ENCODE measurements at regions of chr7 and their contacts with region 1.

Region 1: GRCh38 chr7:29564496-29565223 is 1.0 kb downstream of the PRR15 start:
- DNase-seq: peak; percentile 50
- ATAC-seq: peak; percentile 62
- H3K4me3 ChIP-seq: peak overlapping the region; percentile 67 to 97 (median 79)
- H3K27ac ChIP-seq: peak overlapping the region; percentile 87
- H3K4me1 ChIP-seq: peaks cover 53% of the 10 kb centered on the region
- H3K27me3 ChIP-seq: no peaks in the 10 kb centered on the region; a peak in 1 of 5 replicates
- CTCF ChIP-seq: peak; percentile 23; the same call in 1 of the 2 replicates
- EP300 ChIP-seq: no peak
- POLR2A ChIP-seq: no peak
- RAD21 ChIP-seq: no peak

Region 2: GRCh38 chr7:28926871-28927597 is 637.6 kb before region 1 on chr7:
- CTCF ChIA-PET with region 1: no interaction called
- POLR2A ChIA-PET with region 1: no interaction called
- in situ Hi-C with region 1: loop called (anchors 10 kb)
- intact Hi-C with region 1: no loop called
- DNase-seq: peak; percentile 78
- ATAC-seq: peak; percentile 88
- H3K4me3 ChIP-seq: peak overlapping the region; percentile 60 to 72 (median 63)
- H3K27ac ChIP-seq: no peak overlapping the region
- H3K4me1 ChIP-seq: peaks cover 31% of the 10 kb centered on the region
- H3K27me3 ChIP-seq: no peaks in the 10 kb centered on the region
- CTCF ChIP-seq: peak; percentile 87
- EP300 ChIP-seq: no peak
- POLR2A ChIP-seq: no peak; a peak in 1 of 4 replicates
- RAD21 ChIP-seq: peak; percentile 57; the same call in 1 of the 2 replicates

Region 3: DNA sequence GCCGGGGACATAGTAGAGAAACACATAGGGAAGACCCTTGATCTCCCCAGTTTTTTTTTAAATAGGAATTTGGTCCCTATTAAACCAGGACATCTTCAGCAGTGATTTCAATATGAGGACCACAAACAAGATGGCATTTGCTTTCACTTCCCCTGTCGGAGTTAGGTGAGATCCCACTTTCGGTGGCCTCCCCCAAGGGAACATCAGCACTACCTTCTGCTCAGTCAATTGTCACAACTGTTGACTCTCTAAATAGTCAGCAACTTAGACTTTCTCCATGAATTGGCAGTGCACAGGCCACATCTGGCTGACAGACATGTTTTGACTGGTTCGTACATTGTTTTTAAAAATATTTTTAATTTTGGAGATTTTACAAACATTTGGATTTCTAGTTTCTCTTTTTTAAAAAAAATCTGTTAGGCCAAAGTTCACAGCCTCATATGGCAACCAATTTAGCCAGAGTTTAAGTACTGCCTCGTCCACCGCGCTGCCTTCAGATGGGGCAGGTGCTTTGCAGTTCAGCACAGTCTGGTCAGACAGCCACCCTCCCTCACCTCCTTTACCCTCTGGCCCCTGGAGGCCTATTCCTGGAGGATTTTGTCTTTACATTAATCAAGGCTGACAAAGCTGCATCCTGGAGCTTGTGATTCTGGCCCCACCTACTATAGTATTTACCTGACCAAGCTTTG is 140.2 kb before region 1 on chr7:
- CTCF ChIA-PET with region 1: no interaction called
- POLR2A ChIA-PET with region 1: no interaction called
- in situ Hi-C with region 1: no loop called
- intact Hi-C with region 1: no loop called
- DNase-seq: no peak
- ATAC-seq: no peak
- H3K4me3 ChIP-seq: no peak overlapping the region
- H3K27ac ChIP-seq: no peak overlapping the region
- H3K4me1 ChIP-seq: 0 out of 2 replicates have a peak, but pooled peaks cover 6% of the 10 kb centered on the region
- H3K27me3 ChIP-seq: no peaks in the 10 kb centered on the region
- CTCF ChIP-seq: no peak
- EP300 ChIP-seq: no peak
- POLR2A ChIP-seq: no peak
- RAD21 ChIP-seq: no peak

Region 4: DNA sequence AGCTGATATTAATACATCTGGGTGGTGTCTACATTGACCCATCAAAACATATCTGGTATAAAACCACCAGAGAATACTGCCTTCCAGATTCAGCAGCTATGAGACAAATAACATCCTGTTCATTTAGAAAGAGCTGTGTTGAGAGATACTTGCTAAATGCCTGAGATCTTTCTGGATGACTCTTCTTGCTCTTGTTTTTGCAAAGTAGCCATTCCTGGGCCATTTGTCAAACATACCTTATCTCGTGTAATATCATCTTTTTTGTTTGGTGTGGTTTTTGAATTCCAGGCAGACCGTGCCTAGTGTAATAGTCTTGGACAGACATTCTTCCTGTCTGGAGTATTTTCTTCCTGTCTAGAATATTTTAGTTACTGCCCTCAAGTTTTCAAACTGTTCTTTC is 75.7 kb before region 1 on chr7:
- CTCF ChIA-PET with region 1: no interaction called
- POLR2A ChIA-PET with region 1: interaction called, 4 read pairs
- in situ Hi-C with region 1: no loop called
- intact Hi-C with region 1: loop called (anchors 5 kb)
- DNase-seq: peak; percentile 81
- ATAC-seq: no peak
- H3K4me3 ChIP-seq: no peak overlapping the region
- H3K27ac ChIP-seq: peak overlapping the region; percentile 9
- H3K4me1 ChIP-seq: peaks cover 72% of the 10 kb centered on the region
- H3K27me3 ChIP-seq: no peaks in the 10 kb centered on the region
- CTCF ChIP-seq: no peak
- EP300 ChIP-seq: no peak
- POLR2A ChIP-seq: no peak
- RAD21 ChIP-seq: no peak